ENCODE measurements at regions of chr9 and their contacts with region 1.

Region 1: DNA sequence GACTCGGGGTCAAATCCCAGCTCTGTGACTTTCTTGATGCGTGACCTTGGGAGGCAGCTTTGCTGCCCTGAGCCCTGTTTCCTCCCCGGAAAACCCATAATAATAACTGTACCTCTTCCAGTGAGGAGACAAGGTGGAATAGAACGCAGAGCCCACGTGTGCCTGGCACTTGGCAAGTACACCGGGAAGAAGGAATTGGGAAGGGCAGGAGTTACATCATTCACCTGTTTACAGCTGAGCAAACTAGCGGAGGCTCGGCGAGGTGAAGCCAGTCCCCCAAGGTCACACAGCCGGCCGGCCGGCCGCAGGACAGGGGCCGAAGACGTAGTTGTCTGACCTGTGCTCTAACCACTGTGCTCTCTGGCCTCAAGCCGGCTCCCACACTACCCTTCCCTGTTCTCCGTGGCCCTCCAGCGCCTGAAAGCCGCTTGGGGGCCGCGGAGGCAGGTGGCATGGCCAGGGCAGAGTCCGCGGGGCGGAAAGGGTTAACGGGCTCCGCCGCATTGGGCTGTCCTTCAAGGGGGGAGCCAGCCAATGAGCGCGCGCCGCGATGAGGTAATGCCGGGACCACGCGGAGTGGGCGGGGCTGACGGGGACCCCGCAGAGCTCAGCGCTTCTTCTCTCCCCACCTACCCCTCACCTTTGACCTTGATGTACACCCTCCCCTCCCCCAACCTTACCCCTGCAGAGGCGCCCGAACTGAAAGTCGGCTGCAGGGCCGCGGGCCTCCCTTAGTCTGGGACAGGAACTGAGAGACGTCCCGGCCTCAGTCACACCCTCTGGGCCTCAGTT is 125.2 kb downstream of the C9orf50 start:
- DNase-seq: peak; percentile 84
- ATAC-seq: peak; percentile 75
- H3K4me3 ChIP-seq: peak overlapping the region; percentile 22
- H3K27ac ChIP-seq: peak overlapping the region; percentile 99
- H3K4me1 ChIP-seq: peaks cover 49% of the 10 kb centered on the region
- H3K27me3 ChIP-seq: no peaks in the 10 kb centered on the region
- CTCF ChIP-seq: no peak
- POLR2A ChIP-seq: no peak
- RAD21 ChIP-seq: no peak; the same call in 1 of the 2 replicates

Region 2: DNA sequence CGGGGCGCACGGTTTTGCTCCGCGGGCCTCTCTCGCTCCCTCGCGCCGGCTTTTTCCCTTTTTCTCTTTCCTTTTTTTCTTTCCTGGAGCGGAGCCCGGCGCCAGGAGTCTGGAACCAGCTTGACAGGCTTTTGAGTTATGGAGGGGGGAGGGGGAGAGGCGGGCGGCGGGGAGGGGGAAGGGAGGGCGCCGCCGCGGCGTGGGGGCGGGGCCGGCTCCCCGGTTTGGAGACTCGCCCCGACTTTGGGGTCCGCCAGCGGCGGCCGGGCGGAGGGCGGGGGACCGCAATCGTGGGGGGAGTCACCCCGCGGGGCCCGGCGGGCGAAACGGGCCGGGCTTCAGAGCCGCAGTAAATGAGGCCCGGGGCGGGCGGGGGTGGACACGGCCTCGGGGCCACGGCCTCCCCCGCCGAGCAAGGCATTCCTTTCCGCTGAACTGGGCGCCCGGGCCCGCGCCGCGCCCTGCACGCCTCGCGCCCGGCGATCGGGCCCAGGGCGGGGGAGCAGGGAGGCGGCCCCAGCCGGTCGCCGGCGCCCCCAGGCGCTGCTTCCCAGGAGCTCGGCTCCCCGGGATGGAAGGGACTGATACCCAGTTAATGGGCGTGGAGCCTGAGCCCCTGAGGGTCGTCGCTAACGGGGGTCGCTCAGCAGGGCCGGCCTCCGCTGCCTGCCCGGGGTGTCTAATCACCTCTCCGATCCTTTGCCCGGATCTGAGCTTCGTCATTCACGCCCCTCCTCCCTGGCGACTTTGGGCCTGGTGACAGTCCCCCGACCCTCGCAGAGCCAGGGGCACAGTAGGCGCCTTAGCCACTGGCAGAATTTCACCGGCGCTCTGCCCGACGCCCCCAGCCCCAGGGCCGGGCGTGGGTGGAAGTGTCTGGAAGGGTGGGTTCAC is 13.0 kb before region 1 on chr9:
- CTCF ChIA-PET with region 1: interaction called, 5 read pairs
- POLR2A ChIA-PET with region 1: interaction called, 18 read pairs
- dilution Hi-C with region 1: no loop called
- in situ Hi-C with region 1: no loop called
- intact Hi-C with region 1: no loop called
- DNase-seq: peak; percentile 84
- ATAC-seq: peak; percentile 86
- H3K4me3 ChIP-seq: no peak overlapping the region
- H3K27ac ChIP-seq: peak overlapping the region; percentile 99
- H3K4me1 ChIP-seq: peaks cover 49% of the 10 kb centered on the region
- H3K27me3 ChIP-seq: no peaks in the 10 kb centered on the region
- CTCF ChIP-seq: peak; percentile 43
- POLR2A ChIP-seq: peak; percentile 30
- RAD21 ChIP-seq: peak; percentile 59

Region 3: GRCh38 chr9:129569502-129570449 is 74.0 kb after region 1 on chr9:
- CTCF ChIA-PET with region 1: interaction called, 4 read pairs
- POLR2A ChIA-PET with region 1: interaction called, 5 read pairs
- dilution Hi-C with region 1: no loop called
- in situ Hi-C with region 1: no loop called
- intact Hi-C with region 1: loop called (anchors 2 kb)
- DNase-seq: peak; percentile 36
- ATAC-seq: no peak
- H3K4me3 ChIP-seq: no peak overlapping the region
- H3K27ac ChIP-seq: peak overlapping the region; percentile 91
- H3K4me1 ChIP-seq: peaks cover 30% of the 10 kb centered on the region
- H3K27me3 ChIP-seq: no peaks in the 10 kb centered on the region
- CTCF ChIP-seq: peak; percentile 41
- POLR2A ChIP-seq: no peak
- RAD21 ChIP-seq: no peak; the same call in 1 of the 2 replicates

Region 4: DNA sequence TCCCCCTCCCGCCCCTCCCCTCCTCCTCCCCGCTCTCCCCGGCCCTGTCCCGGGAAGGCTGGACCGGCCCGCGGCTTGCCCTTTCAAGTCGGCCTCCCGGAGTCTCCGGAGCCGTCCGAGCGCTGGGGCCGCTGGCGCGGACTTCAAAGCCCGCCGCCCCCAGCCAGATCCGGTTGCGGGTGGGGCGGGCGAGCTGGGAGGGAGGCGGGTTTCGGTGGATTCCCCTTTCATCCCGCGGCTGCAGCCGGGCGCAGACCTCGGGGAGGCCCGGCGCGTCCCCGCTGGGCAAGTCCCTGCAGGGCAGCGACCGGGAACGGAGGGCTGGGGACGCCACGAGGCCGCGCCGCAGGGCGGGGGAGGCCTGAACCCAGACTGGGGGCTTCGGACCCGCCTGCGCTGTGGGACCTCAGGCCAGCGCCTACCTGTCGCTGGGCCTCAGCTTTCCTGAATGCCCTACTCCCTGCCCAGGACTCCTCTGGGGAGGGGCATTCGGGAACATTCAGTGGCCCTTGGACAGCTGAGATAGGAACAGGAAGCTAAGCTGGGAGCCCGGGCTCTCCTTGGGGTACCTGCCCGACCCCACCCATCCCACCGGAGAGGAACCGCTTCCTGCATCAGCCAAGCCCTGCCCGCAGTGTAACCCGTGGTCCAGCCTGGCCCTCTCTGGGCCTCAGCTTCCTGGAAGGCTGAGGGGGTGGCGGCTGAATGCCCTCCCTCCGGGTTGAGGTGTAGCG is 101.8 kb after region 1 on chr9:
- CTCF ChIA-PET with region 1: no interaction called
- POLR2A ChIA-PET with region 1: interaction called, 27 read pairs
- dilution Hi-C with region 1: no loop called
- in situ Hi-C with region 1: no loop called
- intact Hi-C with region 1: no loop called
- DNase-seq: peak; percentile 65
- ATAC-seq: peak; percentile 68
- H3K4me3 ChIP-seq: peak overlapping the region; percentile 42
- H3K27ac ChIP-seq: peak overlapping the region; percentile 67
- H3K4me1 ChIP-seq: peaks cover 19% of the 10 kb centered on the region
- H3K27me3 ChIP-seq: no peaks in the 10 kb centered on the region
- CTCF ChIP-seq: no peak
- POLR2A ChIP-seq: no peak
- RAD21 ChIP-seq: no peak